Panc1 (cell line): ENCODE measurements at regions of chr10 and their contacts with region 1.

Region 1: GRCh38 chr10:127456122-127456521 is 93.0 kb upstream of the NPS start:
- DNase-seq: no peak
- ATAC-seq: no peak
- H3K4me3 ChIP-seq: no peak overlapping the region
- H3K27ac ChIP-seq: no peak overlapping the region
- H3K4me1 ChIP-seq: no peaks in the 10 kb centered on the region
- H3K27me3 ChIP-seq: no peaks in the 10 kb centered on the region
- CTCF ChIP-seq: no peak

Region 2: GRCh38 chr10:126867567-126868365 is 588.4 kb before region 1 on chr10:
- CTCF ChIA-PET with region 1: no interaction called
- POLR2A ChIA-PET with region 1: interaction called, 13 read pairs
- in situ Hi-C with region 1: no loop called
- intact Hi-C with region 1: no loop called
- DNase-seq: no peak
- ATAC-seq: no peak
- H3K4me3 ChIP-seq: no peak overlapping the region
- H3K27ac ChIP-seq: no peak overlapping the region
- H3K4me1 ChIP-seq: no peaks in the 10 kb centered on the region
- H3K27me3 ChIP-seq: peaks cover 8% of the 10 kb centered on the region
- CTCF ChIP-seq: no peak